ENCODE measurements at regions of chr5 and their contacts with region 1.

Region 1: DNA sequence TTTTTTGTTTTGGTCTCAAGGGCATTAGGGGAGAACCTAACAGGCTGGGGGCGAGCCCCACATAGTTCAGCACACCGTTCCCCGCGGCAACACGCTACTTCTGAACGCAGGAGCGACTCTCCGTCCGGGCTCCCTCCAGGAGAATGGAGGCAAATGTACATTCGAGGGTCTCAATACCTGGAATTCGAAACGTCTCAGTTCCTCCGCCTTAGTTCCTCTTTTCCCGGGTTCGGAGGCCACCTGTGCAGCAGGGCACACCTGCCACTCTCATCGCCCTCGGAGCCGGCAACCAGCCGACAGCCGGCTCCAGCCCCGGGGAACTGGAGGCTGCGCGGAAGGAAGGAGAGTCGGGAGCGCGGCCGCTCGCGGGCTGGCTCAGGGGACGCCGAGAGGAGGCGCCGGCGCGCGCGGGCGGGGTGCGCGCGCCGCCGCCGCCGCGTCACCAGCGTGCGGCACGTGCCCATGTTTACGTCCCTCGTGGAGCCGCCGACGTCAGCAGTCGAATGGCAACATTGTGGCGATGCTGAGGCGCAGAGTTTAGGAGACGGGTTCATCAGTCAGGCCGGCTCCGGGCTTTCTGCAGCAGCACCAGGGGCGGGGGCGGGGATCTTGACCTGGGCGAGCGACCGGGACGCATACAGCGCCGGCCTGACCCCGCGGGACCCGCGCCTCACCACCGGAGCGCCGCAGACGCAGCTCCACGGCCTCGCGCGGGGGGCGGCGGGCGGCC is at the start of gene JMY:
- DNase-seq: peak; percentile 81
- H3K4me3 ChIP-seq: peak within 1 kb of the TSS; percentile 36 to 73 (median 64)
- H3K27ac ChIP-seq: peak within 1 kb of the TSS; percentile 54
- H3K4me1 ChIP-seq: peaks cover 10% of the 10 kb centered on the region
- H3K27me3 ChIP-seq: no peaks in the 10 kb centered on the region
- CTCF ChIP-seq: peak in 1 of 2 donors; percentile 22
- POLR2A ChIP-seq: peak; percentile 87
- total RNA-seq, gene JMY: 6.3 and 6.5 TPM in 2 replicates

Region 2: DNA sequence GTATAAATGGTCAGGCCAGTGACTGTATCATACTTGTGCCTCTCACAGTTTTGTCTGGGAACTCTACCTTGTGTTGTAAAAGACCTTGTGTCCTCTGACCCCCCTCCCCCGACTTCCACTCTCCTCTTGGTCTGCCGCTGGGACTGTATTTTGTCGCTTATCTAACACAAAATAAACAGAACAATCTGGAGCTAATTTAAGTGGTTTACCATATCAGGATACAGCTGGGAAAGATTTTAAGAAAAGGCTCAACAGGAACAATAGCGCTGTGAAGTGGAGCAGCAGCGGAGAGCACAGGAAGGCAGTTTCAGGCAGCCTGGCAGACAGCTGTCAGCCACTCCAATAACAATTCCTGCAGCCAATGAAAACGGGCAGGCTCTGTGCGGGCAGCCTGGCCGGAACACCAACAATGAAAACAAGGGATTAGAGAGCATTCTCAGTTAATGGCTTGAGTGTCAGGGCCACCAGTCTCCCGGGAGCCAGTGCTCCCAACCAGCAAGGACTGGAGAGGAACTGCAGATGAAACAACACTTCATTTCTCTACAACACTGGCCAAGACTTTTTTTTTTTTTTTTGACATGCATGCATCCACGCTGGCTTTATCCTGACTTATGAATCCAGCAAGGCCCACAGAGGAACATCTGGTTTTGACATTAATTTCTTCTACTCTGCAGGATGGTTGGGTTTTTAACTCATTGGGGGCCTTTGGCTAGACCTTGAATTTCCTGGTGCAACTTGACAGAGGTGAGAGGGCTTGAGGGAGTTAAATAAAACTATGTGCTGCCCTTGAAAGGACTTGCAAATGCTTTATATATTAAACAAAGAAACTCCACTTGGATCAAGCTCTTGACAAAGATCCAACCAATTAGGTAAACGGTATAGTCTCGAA is 327.4 kb before region 1 on chr5:
- CTCF ChIA-PET with region 1: no interaction called
- POLR2A ChIA-PET with region 1: no interaction called
- dilution Hi-C with region 1: no loop called
- intact Hi-C with region 1: loop called (anchors 2 kb)
- DNase-seq: peak; percentile 98
- H3K4me3 ChIP-seq: no peak overlapping the region
- H3K27ac ChIP-seq: peak overlapping the region; percentile 85
- H3K4me1 ChIP-seq: peaks cover 18% of the 10 kb centered on the region
- H3K27me3 ChIP-seq: no peaks in the 10 kb centered on the region
- CTCF ChIP-seq: no peak
- POLR2A ChIP-seq: no peak

Region 3: GRCh38 chr5:79157305-79157704 is 78.5 kb before region 1 on chr5:
- CTCF ChIA-PET with region 1: no interaction called
- POLR2A ChIA-PET with region 1: no interaction called
- dilution Hi-C with region 1: no loop called
- intact Hi-C with region 1: loop called (anchors 1 kb)
- DNase-seq: no peak
- H3K4me3 ChIP-seq: no peak overlapping the region
- H3K27ac ChIP-seq: no peak overlapping the region
- H3K4me1 ChIP-seq: no peaks in the 10 kb centered on the region
- H3K27me3 ChIP-seq: peaks cover 0 to 5% of the 10 kb centered on the region in 2 experiments
- CTCF ChIP-seq: no peak
- POLR2A ChIP-seq: no peak

Region 4: DNA sequence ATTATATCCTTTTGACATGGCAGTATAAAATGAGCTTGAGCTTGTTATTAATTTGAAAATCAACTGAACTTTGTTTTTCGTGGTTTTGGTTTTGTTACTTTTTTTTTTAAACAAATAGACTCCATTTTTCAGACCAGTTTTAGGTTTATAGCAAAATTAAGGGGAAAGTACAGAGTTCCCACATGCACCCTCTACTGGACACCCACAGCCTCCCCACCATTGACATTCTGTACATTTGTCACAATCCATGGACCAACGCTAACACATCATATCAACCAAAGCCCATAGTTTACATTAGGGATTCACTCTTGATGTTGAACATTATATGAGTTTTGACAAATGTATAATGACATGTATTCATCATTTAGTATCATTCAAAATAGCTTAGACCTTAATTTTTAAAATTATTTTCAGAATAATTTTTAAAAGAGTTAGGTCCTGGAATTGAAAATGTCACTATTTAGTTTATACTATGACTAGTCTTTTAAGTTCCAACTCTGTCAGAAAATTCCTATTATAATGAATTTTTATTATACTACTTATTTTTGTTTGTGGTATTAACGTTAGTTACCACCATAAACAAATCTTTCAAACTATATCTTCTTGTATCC is 35.1 kb before region 1 on chr5:
- CTCF ChIA-PET with region 1: interaction called, 4 read pairs
- POLR2A ChIA-PET with region 1: no interaction called
- dilution Hi-C with region 1: no loop called
- intact Hi-C with region 1: loop called (anchors 5 kb)
- DNase-seq: no peak
- H3K4me3 ChIP-seq: no peak overlapping the region
- H3K27ac ChIP-seq: no peak overlapping the region
- H3K4me1 ChIP-seq: peaks cover 14% of the 10 kb centered on the region
- H3K27me3 ChIP-seq: no peaks in the 10 kb centered on the region
- CTCF ChIP-seq: peak; percentile 19 to 27
- POLR2A ChIP-seq: no peak

Region 5: DNA sequence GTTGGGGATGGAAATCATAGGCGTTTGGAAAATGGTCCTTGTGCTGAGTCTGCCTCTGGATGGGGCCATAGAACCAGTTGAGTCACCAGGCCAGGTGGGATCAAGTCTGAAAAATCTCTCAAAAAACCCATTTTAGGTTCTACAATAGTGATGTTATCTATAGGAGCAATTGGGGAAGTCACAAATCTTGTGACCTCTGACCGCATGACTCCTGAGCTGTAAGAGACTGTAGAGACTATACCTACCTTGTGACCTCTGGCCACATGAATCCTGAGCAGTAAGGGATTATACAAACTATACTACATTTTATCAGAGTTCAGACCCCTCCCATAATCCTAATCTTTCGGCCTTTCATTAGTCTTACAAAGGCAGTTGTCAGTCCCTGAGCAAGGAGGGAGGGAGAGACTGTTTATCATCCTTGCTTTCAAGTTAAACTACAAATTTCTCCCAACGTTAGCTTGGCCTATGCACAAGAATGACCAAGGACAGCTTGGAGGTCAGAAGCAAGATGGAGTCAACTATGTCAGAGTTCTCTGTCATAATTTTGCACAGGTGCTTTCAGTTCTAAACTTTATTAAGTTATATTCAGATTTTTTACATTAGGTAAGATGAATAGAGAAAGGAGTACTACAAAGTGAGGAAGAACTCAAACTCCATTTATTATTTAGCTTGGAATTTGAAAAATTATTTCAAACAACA is 11.4 kb before region 1 on chr5:
- CTCF ChIA-PET with region 1: no interaction called
- POLR2A ChIA-PET with region 1: no interaction called
- dilution Hi-C with region 1: no loop called
- intact Hi-C with region 1: no loop called
- DNase-seq: no peak
- H3K4me3 ChIP-seq: no peak overlapping the region
- H3K27ac ChIP-seq: no peak overlapping the region
- H3K4me1 ChIP-seq: no peaks in the 10 kb centered on the region
- H3K27me3 ChIP-seq: no peaks in the 10 kb centered on the region
- CTCF ChIP-seq: no peak
- POLR2A ChIP-seq: no peak